ENCODE measurements at regions of chr6 and their contacts with region 1.

Region 1: DNA sequence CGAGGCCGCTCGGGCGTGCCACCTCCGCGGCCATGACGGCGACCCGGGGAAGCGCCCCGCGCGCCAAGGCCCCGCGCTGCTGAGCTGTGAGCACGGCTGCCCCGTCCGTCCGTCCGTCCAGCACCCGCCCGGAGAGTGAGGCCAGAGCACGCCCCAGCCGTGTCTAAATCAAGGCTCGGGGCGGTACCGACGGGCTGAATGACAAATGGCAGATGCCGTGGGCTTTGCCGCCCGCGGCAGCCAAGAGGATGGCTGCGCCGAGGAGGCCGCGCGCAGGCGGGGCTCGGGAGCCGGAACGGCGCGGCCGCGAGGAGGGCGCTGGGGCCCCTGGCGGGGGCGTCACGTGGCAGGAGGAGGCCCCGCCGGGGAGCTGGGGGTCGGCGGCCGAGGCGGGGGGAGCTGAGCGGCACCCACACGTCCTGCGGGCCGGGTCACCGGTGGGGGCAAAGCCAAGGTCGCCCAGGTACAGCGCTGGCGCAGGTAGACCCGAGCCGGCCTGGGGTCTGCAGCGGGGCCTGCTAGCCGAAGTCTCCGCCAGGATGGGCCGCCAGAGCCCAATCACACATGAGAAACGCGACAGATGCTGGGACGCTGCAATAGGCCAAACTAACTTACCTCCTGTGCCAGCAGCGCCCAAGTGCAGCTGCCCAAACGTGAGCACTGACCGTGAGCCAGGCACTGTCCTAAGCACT is at the start of gene PLAGL1:
- DNase-seq: peak; percentile 64
- H3K4me3 Mint-ChIP-seq: peak within 1 kb of the TSS; percentile 84
- H3K27ac Mint-ChIP-seq: peak within 1 kb of the TSS; percentile 90
- H3K4me1 Mint-ChIP-seq: no peaks in the 10 kb centered on the region
- H3K27me3 Mint-ChIP-seq: no peaks in the 10 kb centered on the region
- CTCF ChIP-seq: no peak
- total RNA-seq, gene PLAGL1: 46.4 and 52.1 TPM in 2 replicates

Region 2: GRCh38 chr6:143677891-143678791 is 330.1 kb before region 1 on chr6 and contains the start of gene PHACTR2:
- CTCF ChIA-PET with region 1: interaction called, 3 read pairs
- POLR2A ChIA-PET with region 1: interaction called, 4 read pairs
- intact Hi-C with region 1: loop called (anchors 10 kb)
- DNase-seq: peak; percentile 75
- H3K4me3 Mint-ChIP-seq: peak within 1 kb of the TSS; percentile 88
- H3K27ac Mint-ChIP-seq: peak within 1 kb of the TSS; percentile 87
- H3K4me1 Mint-ChIP-seq: peaks cover 51% of the 10 kb centered on the region
- H3K27me3 Mint-ChIP-seq: no peaks in the 10 kb centered on the region
- CTCF ChIP-seq: no peak
- total RNA-seq, gene PHACTR2: 30.0 and 34.4 TPM in 2 replicates

Region 3: GRCh38 chr6:143688681-143689080 is 319.6 kb before region 1 on chr6:
- CTCF ChIA-PET with region 1: no interaction called
- POLR2A ChIA-PET with region 1: no interaction called
- intact Hi-C with region 1: no loop called
- DNase-seq: no peak
- H3K4me3 Mint-ChIP-seq: no peak overlapping the region
- H3K27ac Mint-ChIP-seq: no peak overlapping the region
- H3K4me1 Mint-ChIP-seq: peaks cover 22% of the 10 kb centered on the region
- H3K27me3 Mint-ChIP-seq: no peaks in the 10 kb centered on the region
- CTCF ChIP-seq: no peak